ENCODE measurements at regions of chr6 and their contacts with region 1.

Region 1: DNA sequence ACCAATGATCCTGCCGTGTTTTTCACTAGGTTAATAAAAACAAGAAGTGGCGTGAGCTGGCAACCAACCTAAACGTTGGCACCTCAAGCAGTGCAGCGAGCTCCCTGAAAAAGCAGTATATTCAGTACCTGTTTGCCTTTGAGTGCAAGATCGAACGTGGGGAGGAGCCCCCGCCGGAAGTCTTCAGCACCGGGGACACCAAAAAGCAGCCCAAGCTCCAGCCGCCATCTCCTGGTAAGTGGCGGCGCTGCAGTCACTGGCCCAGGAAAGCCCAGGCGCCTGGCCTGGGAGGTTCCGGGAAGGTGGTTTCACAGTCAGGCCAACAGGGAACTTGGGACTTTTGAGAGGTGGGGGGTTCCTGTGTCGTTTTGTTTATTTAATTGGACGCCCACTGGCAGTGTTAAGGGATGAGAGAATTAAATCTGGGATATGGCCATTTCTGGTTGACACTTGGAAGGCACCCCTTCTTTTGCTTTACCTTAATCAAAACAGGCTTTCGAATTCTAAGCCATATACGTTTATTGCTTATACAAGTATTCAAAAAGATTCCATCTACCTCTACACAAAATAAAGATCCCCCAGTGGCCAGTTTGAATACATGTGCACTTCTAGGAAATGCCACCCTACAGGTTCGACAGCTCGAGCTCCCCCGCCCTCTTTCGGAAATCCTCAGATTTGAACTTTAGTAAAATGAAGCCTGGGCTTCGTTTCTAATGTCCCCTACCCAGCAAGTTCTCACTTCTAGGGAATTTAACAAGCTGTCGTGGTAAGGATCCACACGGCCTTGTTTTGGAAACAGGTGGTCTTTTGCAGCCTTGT is 138.9 kb downstream of the TMEM242 start:
- DNase-seq: peak; percentile 59 to 77
- H3K4me3 ChIP-seq: peak overlapping the region in 1 of 2 donors; percentile 3
- H3K27ac ChIP-seq: peak overlapping the region in 1 of 2 donors; percentile 52
- H3K4me1 ChIP-seq: no peaks in the 10 kb centered on the region
- H3K27me3 ChIP-seq: no peaks in the 10 kb centered on the region
- CTCF ChIP-seq: peak; percentile 84 to 96 (median 88)
- POLR2A ChIP-seq: no peak

Region 2: GRCh38 chr6:157045831-157046454 is 138.5 kb before region 1 on chr6:
- intact Hi-C with region 1: loop called (anchors 10 kb)
- DNase-seq: no peak
- H3K4me3 ChIP-seq: no peak overlapping the region
- H3K27ac ChIP-seq: no peak overlapping the region
- H3K4me1 ChIP-seq: no peaks in the 10 kb centered on the region
- H3K27me3 ChIP-seq: no peaks in the 10 kb centered on the region
- CTCF ChIP-seq: peak in 3 of 4 experiments; percentile 27 to 57 (median 34)
- POLR2A ChIP-seq: no peak

Measured in uterus (tissue), 4 donors.